ENCODE measurements at regions of chr3 and their contacts with region 1.

Region 1: GRCh38 chr3:148309390-148310035 is 388.2 kb upstream of the AGTR1 start:
- DNase-seq: no peak
- ATAC-seq: peak; percentile 46

Region 2: DNA sequence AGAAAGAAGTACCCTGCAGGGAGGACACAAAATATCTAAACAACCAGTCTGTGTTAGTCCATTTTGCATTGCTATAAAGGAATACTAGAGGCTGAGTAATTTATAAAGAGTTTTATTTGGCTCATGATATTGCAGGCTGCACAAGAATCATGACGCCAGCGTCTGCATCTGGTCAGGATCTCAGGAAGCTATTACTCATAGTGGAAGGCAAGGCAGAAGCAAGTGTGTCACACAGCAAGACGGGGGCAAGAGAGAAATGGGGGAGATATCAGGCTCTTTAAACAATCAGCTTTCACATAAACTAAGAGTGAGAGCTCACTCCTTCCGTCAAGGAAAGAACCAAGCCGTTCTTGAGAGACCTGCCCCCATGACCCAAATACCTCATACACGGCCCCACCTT is 285.5 kb before region 1 on chr3:
- intact Hi-C with region 1: no loop called
- DNase-seq: no peak
- ATAC-seq: peak; percentile 42

Region 3: DNA sequence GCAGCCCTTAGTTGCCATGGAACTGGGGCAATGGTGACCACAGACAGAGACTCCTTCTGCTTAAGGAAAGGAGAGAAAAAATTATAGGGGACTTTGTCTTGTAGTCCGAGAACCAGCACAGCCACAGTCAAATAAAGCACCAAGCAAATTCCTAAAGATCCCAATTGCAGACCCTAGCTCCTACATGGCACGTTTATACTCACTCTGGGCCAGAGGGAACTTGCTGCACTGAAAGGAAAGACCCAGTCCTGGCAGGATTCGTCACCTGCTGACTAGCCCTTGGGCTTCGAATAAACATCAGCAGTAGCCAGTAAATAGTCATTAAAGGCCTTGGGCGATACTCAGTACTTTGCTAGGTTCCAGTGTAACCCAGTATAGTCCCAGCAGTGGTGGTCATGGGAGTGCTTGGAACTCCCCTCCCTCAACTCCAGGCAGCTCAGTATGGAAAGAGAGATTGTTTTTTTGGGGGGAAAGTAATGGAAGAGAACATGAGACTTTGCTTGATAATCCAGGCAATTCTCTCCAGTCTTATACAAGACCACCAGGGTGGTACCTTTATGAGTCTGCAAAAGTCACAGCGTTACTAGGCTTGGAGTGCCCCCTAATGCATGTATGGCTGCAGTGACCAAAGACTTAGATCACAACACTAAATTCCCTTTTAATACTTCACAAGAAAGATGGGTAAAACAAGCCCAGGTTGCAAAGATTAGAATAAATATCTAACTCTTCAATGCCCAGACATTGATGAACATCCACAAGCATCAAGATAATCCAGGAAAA is 321.8 kb after region 1 on chr3:
- intact Hi-C with region 1: loop called (anchors 10 kb)
- DNase-seq: no peak
- ATAC-seq: no peak